A549 (cell line): ENCODE measurements at regions of chr11 and their contacts with region 1.

Region 1: DNA sequence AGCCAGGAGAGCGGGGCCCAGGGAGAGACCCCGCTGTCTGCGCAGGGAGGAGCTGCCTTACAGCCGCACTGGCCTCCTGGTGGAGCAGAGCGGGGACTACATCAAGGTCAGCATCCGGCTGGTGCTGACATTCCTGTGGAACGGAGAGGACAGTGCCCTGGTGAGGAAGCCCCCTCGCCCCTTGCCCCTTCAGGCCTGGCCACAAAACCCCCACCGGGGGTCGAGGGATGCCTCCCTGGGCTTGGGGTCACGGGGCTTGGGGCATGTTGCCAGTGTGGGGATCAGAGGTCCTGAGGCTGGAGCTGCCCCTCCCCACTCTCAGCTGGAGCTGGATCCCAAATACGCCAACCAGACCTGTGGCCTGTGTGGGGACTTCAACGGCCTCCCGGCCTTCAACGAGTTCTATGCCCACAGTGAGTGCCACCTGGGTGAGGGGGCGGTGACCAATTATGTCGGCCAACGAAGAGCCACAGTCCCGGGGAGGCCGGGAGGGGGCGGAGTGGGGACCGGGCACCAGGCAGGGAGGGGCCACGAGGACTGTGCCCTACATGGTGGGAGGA is 4.2 kb downstream of the MUC5B start:
- DNase-seq: peak; percentile 40 to 81
- ATAC-seq: peak; percentile 45 to 75; a peak in 4 of 6 replicates
- H3K4me3 ChIP-seq: no peak overlapping the region
- H3K27ac ChIP-seq: peak overlapping the region in 1 of 2 experiments; percentile 81; a peak in 3 of 6 replicates
- H3K4me1 ChIP-seq: peaks cover 31% of the 10 kb centered on the region
- CTCF ChIP-seq: no peak
- EP300 ChIP-seq: no peak
- POLR2A ChIP-seq: no peak
- RAD21 ChIP-seq: peak in 1 of 2 experiments; percentile 5; a peak in 1 of 5 replicates

Region 2: GRCh38 chr11:1113405-1114201 is 113.5 kb before region 1 on chr11:
- CTCF ChIA-PET with region 1: interaction called, 14 read pairs
- POLR2A ChIA-PET with region 1: no interaction called
- DNase-seq: no peak
- ATAC-seq: peak; percentile 28 to 34; a peak in 4 of 6 replicates
- H3K4me3 ChIP-seq: no peak overlapping the region
- H3K27ac ChIP-seq: peak overlapping the region; percentile 2 to 41; a peak in 4 of 6 replicates
- H3K4me1 ChIP-seq: 0 out of 3 replicates have a peak, but pooled peaks cover 5% of the 10 kb centered on the region
- CTCF ChIP-seq: no peak
- EP300 ChIP-seq: no peak
- POLR2A ChIP-seq: no peak
- RAD21 ChIP-seq: no peak

Region 3: DNA sequence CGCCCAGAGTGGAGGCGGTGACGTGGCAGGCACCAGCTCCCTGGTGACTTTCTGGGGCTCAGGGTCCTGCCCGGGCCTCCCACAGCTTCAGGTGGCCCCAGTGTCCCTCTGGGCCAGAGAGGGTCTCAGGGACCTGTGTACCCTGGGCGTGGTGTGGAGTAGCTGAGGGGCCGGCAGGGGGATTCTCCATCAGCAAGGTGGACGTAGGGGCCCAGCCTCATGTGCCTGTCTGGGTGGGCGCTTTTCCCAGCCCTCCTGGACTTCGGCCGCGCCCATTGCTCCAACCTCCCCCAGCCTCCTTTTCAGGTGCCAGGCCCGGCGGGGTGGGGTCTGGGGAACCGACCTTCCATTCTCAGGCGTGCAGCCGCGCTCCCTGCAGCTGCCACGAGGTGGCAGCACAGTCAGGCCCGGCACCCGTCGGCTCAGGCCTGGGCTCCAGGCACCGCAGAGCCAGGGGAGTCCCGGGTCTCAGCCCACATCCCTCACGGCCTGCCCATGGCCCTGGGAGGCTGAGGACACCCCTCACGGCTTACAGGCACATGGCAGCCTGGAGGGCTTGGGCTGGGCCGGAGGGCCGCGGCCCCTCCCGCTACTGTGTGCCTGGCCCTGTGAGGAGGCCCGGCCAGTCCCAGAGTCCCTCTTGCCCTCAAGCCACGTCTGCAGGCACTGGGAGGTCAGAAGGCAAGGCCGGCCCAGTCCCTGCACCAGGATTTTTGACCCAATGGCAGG is 24.1 kb before region 1 on chr11:
- CTCF ChIA-PET with region 1: interaction called, 14 read pairs
- POLR2A ChIA-PET with region 1: no interaction called
- DNase-seq: peak; percentile 67 to 89
- ATAC-seq: peak; percentile 73 to 89
- H3K4me3 ChIP-seq: no peak overlapping the region
- H3K27ac ChIP-seq: peak overlapping the region; percentile 72 to 86
- H3K4me1 ChIP-seq: peaks cover 18% of the 10 kb centered on the region
- CTCF ChIP-seq: peak; percentile 84
- EP300 ChIP-seq: no peak
- POLR2A ChIP-seq: no peak
- RAD21 ChIP-seq: peak; percentile 73 to 88